CD4-positive, alpha-beta T cell (primary cell): ENCODE measurements at regions of chr13 and their contacts with region 1.

Region 1: DNA sequence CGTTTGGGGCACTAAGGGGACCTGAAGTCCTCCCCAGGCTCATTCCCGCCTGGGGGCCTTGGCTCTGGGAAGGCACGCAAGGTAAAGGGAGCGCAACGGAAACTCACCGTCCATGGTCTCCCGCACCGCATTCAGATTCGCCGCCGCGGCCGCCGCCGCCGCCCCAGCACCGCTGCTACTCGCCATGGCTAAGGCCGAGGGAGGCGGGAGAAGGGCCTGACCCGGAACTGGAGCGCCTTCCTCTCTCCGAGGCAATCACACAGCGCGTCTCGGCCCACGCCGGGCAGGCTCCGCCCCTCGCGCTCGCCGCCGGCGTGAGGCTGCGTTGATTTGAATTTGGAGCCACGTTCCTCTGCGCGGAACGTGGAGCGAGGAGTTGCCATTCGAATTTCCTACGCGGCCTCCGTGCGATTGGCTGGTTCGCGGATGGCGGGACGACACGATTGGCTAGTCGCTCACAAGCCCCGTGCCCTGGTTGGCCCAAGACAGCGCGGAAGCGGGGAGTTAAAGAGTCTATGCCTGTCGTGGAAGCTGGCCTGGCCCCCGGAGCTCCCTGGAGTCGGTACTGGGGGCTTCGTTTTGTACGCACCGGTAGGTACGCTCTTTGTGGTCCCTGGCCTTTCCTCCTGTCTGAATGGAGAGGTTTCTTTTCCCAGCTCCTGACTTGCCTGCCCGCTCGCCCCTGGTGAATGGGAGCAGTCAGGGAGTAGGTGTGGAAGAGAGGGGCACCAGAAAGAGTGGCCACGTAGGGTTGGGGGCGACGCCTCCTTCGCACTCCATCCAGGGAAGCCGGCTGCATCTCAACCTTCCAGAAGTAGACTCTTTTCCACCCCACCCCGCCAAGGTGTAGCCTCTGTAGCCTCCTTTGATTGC is at the starts of genes BORA and MZT1:
- DNase-seq: peak; percentile 87 to 98 (median 92)
- ATAC-seq: peak; percentile 92
- H3K4me3 ChIP-seq: peak within 1 kb of the TSS; percentile 96
- H3K4me3 Mint-ChIP-seq: peak within 1 kb of the TSS; percentile 94
- H3K27ac ChIP-seq: peak within 1 kb of the TSS; percentile 44 to 52
- H3K27ac Mint-ChIP-seq: peak within 1 kb of the TSS; percentile 77
- H3K4me1 ChIP-seq: peaks cover 26% of the 10 kb centered on the region
- H3K4me1 Mint-ChIP-seq: peaks cover 72% of the 10 kb centered on the region
- H3K27me3 ChIP-seq: no peaks in the 10 kb centered on the region
- H3K27me3 Mint-ChIP-seq: no peaks in the 10 kb centered on the region
- CTCF ChIP-seq: no peak
- total RNA-seq, gene BORA: 3.8 to 4.4 TPM
- total RNA-seq, gene MZT1: 5.1 to 6.2 TPM

Region 2: GRCh38 chr13:71290963-71291841 is 1436.5 kb before region 1 on chr13:
- CTCF ChIA-PET with region 1: no interaction called
- POLR2A ChIA-PET with region 1: no interaction called
- intact Hi-C with region 1: loop called in 1 of 2 experiments (anchors 10 kb)
- DNase-seq: peak in 13 of 14 experiments; percentile 3 to 89 (median 18)
- ATAC-seq: peak; percentile 73
- H3K4me3 ChIP-seq: peak overlapping the region; percentile 39
- H3K4me3 Mint-ChIP-seq: peak overlapping the region; percentile 89
- H3K27ac ChIP-seq: peak overlapping the region; percentile 51 to 76
- H3K27ac Mint-ChIP-seq: peak overlapping the region; percentile 85
- H3K4me1 ChIP-seq: peaks cover 10% of the 10 kb centered on the region
- H3K4me1 Mint-ChIP-seq: peaks cover 21% of the 10 kb centered on the region
- H3K27me3 ChIP-seq: no peaks in the 10 kb centered on the region
- H3K27me3 Mint-ChIP-seq: peaks cover 7% of the 10 kb centered on the region
- CTCF ChIP-seq: no peak

Region 3: GRCh38 chr13:72781451-72782439 is 54.1 kb after region 1 on chr13 and contains the starts of genes DIS3 and PIBF1:
- CTCF ChIA-PET with region 1: no interaction called
- POLR2A ChIA-PET with region 1: interaction called, 3 read pairs
- intact Hi-C with region 1: loop called (anchors 2 kb)
- DNase-seq: peak; percentile 89 to 98 (median 92)
- ATAC-seq: peak; percentile 96
- H3K4me3 ChIP-seq: peak within 1 kb of the TSS; percentile 88
- H3K4me3 Mint-ChIP-seq: peak within 1 kb of the TSS; percentile 98
- H3K27ac ChIP-seq: peak within 1 kb of the TSS; percentile 87 to 93
- H3K27ac Mint-ChIP-seq: peak within 1 kb of the TSS; percentile 95
- H3K4me1 ChIP-seq: peaks cover 36% of the 10 kb centered on the region
- H3K4me1 Mint-ChIP-seq: peaks cover 74% of the 10 kb centered on the region
- H3K27me3 ChIP-seq: no peaks in the 10 kb centered on the region
- H3K27me3 Mint-ChIP-seq: no peaks in the 10 kb centered on the region
- CTCF ChIP-seq: no peak
- total RNA-seq, gene DIS3: 47.9 to 51.7 TPM
- total RNA-seq, gene PIBF1: 22.6 to 22.7 TPM